ENCODE measurements at regions of chr4 and their contacts with region 1.

Region 1: DNA sequence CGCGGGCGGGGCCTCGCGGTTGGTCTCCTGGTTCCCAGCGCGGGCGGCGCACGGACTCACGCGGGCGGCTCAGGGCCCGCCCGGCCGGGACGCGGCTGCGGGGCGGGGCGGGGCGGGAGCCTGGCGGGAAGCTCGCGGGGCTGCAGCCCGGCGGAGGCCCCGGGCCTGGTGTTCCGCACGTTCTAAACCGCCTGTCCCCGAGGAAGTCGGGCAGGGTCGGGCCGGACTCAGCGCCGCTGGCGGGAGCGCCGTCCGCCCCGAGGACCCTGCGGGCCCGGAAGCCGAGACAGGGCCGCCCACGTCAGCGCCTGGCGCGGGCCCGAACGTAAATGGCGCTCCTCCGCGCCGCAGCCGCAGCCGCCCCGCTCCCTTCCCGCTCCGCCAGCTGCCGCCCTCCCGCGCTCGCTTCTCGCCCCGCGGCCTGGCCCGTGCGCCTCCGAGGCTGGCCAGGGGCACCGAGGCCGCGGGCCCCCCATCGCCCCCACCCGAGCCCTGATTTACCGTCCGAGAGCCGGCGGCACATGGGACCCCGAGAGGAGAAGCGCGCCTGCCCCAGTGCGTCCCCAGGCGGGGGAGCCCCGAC is 309 bp upstream of the CTBP1 start:
- DNase-seq: peak; percentile 79 to 92 (median 90)
- ATAC-seq: peak; percentile 80
- H3K4me3 ChIP-seq: peak overlapping the region; percentile 82
- H3K4me3 Mint-ChIP-seq: peak overlapping the region; percentile 80 to 93 (median 88)
- H3K27ac ChIP-seq: peak overlapping the region; percentile 97
- H3K27ac Mint-ChIP-seq: peak overlapping the region; percentile 90 to 96 (median 94)
- H3K4me1 ChIP-seq: peaks cover 51 to 66% of the 10 kb centered on the region in 2 donors
- H3K4me1 Mint-ChIP-seq: peaks cover 50 to 74% (median 65%) of the 10 kb centered on the region in 7 donors
- H3K27me3 ChIP-seq: no peaks in the 10 kb centered on the region
- H3K27me3 Mint-ChIP-seq: no peaks in the 10 kb centered on the region

Region 2: GRCh38 chr4:986879-987623 is 262.2 kb before region 1 on chr4 and contains the start of gene IDUA:
- CTCF ChIA-PET with region 1: no interaction called
- POLR2A ChIA-PET with region 1: no interaction called
- intact Hi-C with region 1: loop called in 1 of 2 experiments (anchors 5 kb)
- DNase-seq: peak; percentile 75 to 90 (median 84)
- ATAC-seq: peak; percentile 93
- H3K4me3 ChIP-seq: peak within 1 kb of the TSS; percentile 82
- H3K4me3 Mint-ChIP-seq: peak within 1 kb of the TSS; percentile 87 to 95 (median 92)
- H3K27ac ChIP-seq: peak within 1 kb of the TSS; percentile 78
- H3K27ac Mint-ChIP-seq: peak within 1 kb of the TSS; percentile 76 to 90 (median 85)
- H3K4me1 ChIP-seq: peaks cover 19 to 21% of the 10 kb centered on the region in 2 donors
- H3K4me1 Mint-ChIP-seq: peaks cover 11 to 34% (median 22%) of the 10 kb centered on the region in 7 donors
- H3K27me3 ChIP-seq: no peaks in the 10 kb centered on the region
- H3K27me3 Mint-ChIP-seq: no peaks in the 10 kb centered on the region
- total RNA-seq, gene IDUA: 42.3 to 72.4 (median 65.8) TPM

Region 3: GRCh38 chr4:1167247-1167949 is 81.8 kb before region 1 on chr4:
- CTCF ChIA-PET with region 1: interaction called, 10 read pairs
- POLR2A ChIA-PET with region 1: interaction called, 13 read pairs
- intact Hi-C with region 1: loop called (anchors 1 kb)
- DNase-seq: peak; percentile 74 to 89 (median 82)
- ATAC-seq: peak; percentile 92
- H3K4me3 ChIP-seq: peak overlapping the region; percentile 90
- H3K4me3 Mint-ChIP-seq: peak overlapping the region; percentile 82 to 90 (median 87)
- H3K27ac ChIP-seq: peak overlapping the region; percentile 74
- H3K27ac Mint-ChIP-seq: peak overlapping the region in 8 of 9 donors; percentile 51 to 86 (median 70)
- H3K4me1 ChIP-seq: peaks cover 3 to 17% of the 10 kb centered on the region in 2 donors
- H3K4me1 Mint-ChIP-seq: peaks cover 8 to 26% (median 18%) of the 10 kb centered on the region in 7 donors
- H3K27me3 ChIP-seq: peaks cover 0 to 9% of the 10 kb centered on the region in 2 donors
- H3K27me3 Mint-ChIP-seq: peaks cover 0 to 21% (median 6%) of the 10 kb centered on the region in 5 donors

Region 4: DNA sequence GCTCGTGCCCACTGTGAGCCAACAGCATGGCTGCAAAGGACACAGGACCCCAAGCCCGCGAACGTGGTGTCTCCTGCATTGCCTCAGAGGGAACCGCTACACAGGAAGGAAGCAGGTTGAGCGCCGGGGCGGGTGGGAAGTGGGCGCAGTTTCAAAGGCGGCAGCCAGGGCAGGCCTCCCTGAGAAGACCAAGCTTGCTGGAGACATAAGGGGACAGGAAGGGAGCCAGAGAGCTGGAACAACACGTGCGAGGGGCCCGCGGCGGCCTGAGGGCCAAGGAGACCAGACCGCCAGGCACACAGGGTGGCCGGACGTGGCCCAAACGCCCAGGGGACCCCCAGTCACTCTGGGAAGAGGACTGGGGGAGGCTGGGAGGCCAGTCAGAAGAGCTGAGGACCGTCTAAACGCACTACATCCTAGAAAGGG is 32.4 kb before region 1 on chr4:
- CTCF ChIA-PET with region 1: no interaction called
- POLR2A ChIA-PET with region 1: interaction called, 11 read pairs
- intact Hi-C with region 1: no loop called
- DNase-seq: peak; percentile 47 to 75 (median 70)
- ATAC-seq: peak; percentile 83
- H3K4me3 ChIP-seq: peak overlapping the region; percentile 22
- H3K4me3 Mint-ChIP-seq: peak overlapping the region; percentile 61 to 77 (median 76)
- H3K27ac ChIP-seq: peak overlapping the region; percentile 52
- H3K27ac Mint-ChIP-seq: peak overlapping the region; percentile 26 to 84 (median 67)
- H3K4me1 ChIP-seq: peaks cover 25 to 27% of the 10 kb centered on the region in 2 donors
- H3K4me1 Mint-ChIP-seq: peaks cover 26 to 50% (median 32%) of the 10 kb centered on the region in 7 donors
- H3K27me3 ChIP-seq: no peaks in the 10 kb centered on the region
- H3K27me3 Mint-ChIP-seq: no peaks in the 10 kb centered on the region

Region 5: GRCh38 chr4:1329408-1330371 is 80.5 kb after region 1 on chr4:
- CTCF ChIA-PET with region 1: no interaction called
- POLR2A ChIA-PET with region 1: interaction called, 14 read pairs
- intact Hi-C with region 1: loop called in 1 of 2 experiments (anchors 1 kb)
- DNase-seq: peak in 7 of 9 donors; percentile 30 to 52 (median 45)
- ATAC-seq: peak; percentile 31
- H3K4me3 ChIP-seq: no peak overlapping the region
- H3K4me3 Mint-ChIP-seq: peak overlapping the region in 7 of 10 donors; percentile 72 to 80 (median 77)
- H3K27ac ChIP-seq: peak overlapping the region; percentile 38
- H3K27ac Mint-ChIP-seq: peak overlapping the region; percentile 74 to 96 (median 92)
- H3K4me1 ChIP-seq: peaks cover 32 to 39% of the 10 kb centered on the region in 2 donors
- H3K4me1 Mint-ChIP-seq: peaks cover 22 to 32% (median 31%) of the 10 kb centered on the region in 7 donors
- H3K27me3 ChIP-seq: no peaks in the 10 kb centered on the region
- H3K27me3 Mint-ChIP-seq: no peaks in the 10 kb centered on the region

Region 6: GRCh38 chr4:1856042-1856788 is 607.0 kb after region 1 on chr4 and contains the start of gene LETM1:
- CTCF ChIA-PET with region 1: no interaction called
- POLR2A ChIA-PET with region 1: no interaction called
- intact Hi-C with region 1: loop called in 1 of 2 experiments (anchors 5 kb)
- DNase-seq: peak; percentile 79 to 96 (median 88)
- ATAC-seq: peak; percentile 98
- H3K4me3 ChIP-seq: peak within 1 kb of the TSS; percentile 86
- H3K4me3 Mint-ChIP-seq: peak within 1 kb of the TSS; percentile 67 to 88 (median 83)
- H3K27ac ChIP-seq: peak within 1 kb of the TSS; percentile 70
- H3K27ac Mint-ChIP-seq: peak within 1 kb of the TSS in 8 of 9 donors; percentile 17 to 80 (median 48)
- H3K4me1 ChIP-seq: peaks cover 10 to 14% of the 10 kb centered on the region in 2 donors
- H3K4me1 Mint-ChIP-seq: peaks cover 31 to 45% (median 41%) of the 10 kb centered on the region in 7 donors
- H3K27me3 ChIP-seq: no peaks in the 10 kb centered on the region
- H3K27me3 Mint-ChIP-seq: no peaks in the 10 kb centered on the region
- total RNA-seq, gene LETM1: 29.5 to 56.4 (median 36.0) TPM

Region 7: DNA sequence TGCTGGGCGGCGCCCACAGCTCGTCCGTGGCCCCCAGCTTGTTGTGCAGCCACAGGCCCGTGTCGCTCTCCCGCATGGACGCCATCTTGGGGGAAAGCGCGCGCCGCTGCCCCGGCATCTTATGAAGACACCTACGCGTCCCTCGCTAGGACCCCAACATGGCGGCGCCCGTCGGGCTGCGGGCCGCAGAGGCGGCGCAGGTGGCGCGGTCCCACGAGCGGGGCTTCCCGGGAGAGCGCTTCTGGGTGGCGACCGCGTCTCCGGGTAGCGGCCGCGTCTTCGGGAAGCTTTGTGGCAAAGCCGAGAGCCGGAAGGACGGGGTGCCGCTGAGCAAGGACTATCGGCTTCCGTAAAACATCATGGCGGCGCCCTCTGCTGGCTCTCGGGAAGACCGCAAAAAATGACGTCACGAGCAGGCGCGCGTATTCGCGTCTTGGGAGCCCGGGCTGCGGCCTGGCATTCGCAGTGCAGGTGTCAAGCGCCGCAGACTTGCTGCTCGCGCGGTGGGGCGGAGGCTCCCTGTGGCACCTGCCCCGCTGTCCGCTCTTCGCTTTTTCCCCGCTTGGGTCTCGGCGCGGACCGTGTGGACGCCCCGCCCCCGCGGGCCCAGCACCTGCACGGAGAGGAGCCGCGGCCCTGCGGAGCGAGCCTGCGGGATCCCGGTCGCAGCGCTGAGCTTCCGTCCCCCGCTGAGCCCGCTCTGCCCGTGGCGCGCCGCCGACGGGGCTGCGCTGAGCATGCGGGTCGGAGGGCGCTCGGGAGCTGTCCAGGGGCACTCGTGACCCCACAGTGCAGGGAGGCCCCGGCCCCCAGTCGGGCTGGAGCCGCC is 759.9 kb after region 1 on chr4 and contains the start of gene NELFA:
- CTCF ChIA-PET with region 1: no interaction called
- POLR2A ChIA-PET with region 1: no interaction called
- intact Hi-C with region 1: loop called in 1 of 2 experiments (anchors 2 kb)
- DNase-seq: peak; percentile 92 to 98 (median 96)
- ATAC-seq: peak; percentile 93
- H3K4me3 ChIP-seq: peak within 1 kb of the TSS; percentile 96
- H3K4me3 Mint-ChIP-seq: peak within 1 kb of the TSS; percentile 81 to 96 (median 94)
- H3K27ac ChIP-seq: peak within 1 kb of the TSS; percentile 99
- H3K27ac Mint-ChIP-seq: peak within 1 kb of the TSS; percentile 91 to 99 (median 96)
- H3K4me1 ChIP-seq: peaks cover 13 to 24% of the 10 kb centered on the region in 2 donors
- H3K4me1 Mint-ChIP-seq: peaks cover 30 to 38% (median 34%) of the 10 kb centered on the region in 7 donors
- H3K27me3 ChIP-seq: no peaks in the 10 kb centered on the region
- H3K27me3 Mint-ChIP-seq: peaks cover 0 to 20% (median 0%) of the 10 kb centered on the region in 5 donors
- total RNA-seq, gene NELFA: 32.7 to 50.1 (median 43.6) TPM

Measured in naive thymus-derived CD4-positive, alpha-beta T cell (primary cell).